CD8-positive, alpha-beta T cell (primary cell): ENCODE measurements at regions of chr19 and their contacts with region 1.

Region 1: GRCh38 chr19:30669329-30670010 is 297.3 kb downstream of the ZNF536 start:
- DNase-seq: peak in 8 of 9 experiments; percentile 11 to 59 (median 41)
- ATAC-seq: no peak
- H3K4me3 ChIP-seq: no peak overlapping the region
- H3K4me3 Mint-ChIP-seq: no peak overlapping the region
- H3K27ac ChIP-seq: no peak overlapping the region
- H3K27ac Mint-ChIP-seq: no peak overlapping the region
- H3K4me1 ChIP-seq: no peaks in the 10 kb centered on the region
- H3K4me1 Mint-ChIP-seq: no peaks in the 10 kb centered on the region
- H3K27me3 ChIP-seq: peaks cover 0 to 6% of the 10 kb centered on the region in 2 experiments
- H3K27me3 Mint-ChIP-seq: peaks cover 36% of the 10 kb centered on the region
- CTCF ChIP-seq: peak; percentile 66

Region 2: DNA sequence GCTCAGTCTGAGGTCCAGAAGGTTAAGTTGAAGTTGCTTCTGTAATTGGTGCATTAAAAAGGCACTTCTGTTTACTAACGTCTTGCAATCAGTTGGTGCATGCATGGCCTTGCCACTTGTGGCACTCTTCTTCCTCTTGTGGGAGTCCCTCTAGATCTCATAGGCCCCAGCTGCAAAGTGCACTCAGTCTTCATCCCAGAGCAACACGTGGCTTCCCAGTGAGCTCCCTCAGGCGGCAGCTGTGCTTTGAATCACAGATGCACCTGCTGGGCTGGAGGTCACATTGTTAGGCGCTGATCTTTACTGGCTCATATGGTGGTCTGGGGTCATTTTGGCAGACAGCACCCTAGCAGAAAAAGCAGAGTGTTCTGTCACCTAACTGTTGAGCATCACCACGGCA is 81.6 kb before region 1 on chr19:
- CTCF ChIA-PET with region 1: no interaction called
- POLR2A ChIA-PET with region 1: no interaction called
- intact Hi-C with region 1: no loop called
- DNase-seq: no peak
- ATAC-seq: no peak
- H3K4me3 ChIP-seq: no peak overlapping the region
- H3K4me3 Mint-ChIP-seq: no peak overlapping the region
- H3K27ac ChIP-seq: no peak overlapping the region
- H3K27ac Mint-ChIP-seq: no peak overlapping the region
- H3K4me1 ChIP-seq: no peaks in the 10 kb centered on the region
- H3K4me1 Mint-ChIP-seq: no peaks in the 10 kb centered on the region
- H3K27me3 ChIP-seq: no peaks in the 10 kb centered on the region
- H3K27me3 Mint-ChIP-seq: no peaks in the 10 kb centered on the region
- CTCF ChIP-seq: no peak

Region 3: DNA sequence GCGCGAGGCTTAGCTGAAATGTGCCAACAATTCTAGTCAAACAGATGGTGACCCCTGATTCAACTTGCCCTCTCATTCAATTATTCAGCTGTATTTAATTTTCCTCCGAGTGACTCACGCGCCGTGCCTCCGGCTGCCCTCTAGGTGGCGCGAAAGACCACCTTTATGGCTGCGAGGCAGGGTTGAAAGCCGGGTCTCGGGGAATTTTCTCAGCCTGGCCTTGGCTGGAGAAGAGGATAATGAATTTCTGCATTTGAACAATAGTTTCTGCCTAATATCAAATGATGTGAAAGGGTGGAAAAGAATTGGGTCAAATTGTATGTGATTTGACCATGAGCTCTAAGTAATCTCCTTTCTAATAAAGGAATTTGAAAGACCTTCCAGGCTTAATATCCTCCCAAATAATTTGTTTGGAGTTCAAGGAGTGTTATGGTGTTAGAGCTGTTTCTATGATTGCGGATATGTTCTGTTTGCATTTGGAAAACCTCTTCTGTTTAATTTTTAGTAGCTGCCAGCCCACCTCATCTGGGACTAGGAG is 13.6 kb after region 1 on chr19:
- CTCF ChIA-PET with region 1: interaction called, 20 read pairs
- POLR2A ChIA-PET with region 1: no interaction called
- intact Hi-C with region 1: no loop called
- DNase-seq: peak in 8 of 9 experiments; percentile 27 to 61 (median 44)
- ATAC-seq: no peak
- H3K4me3 ChIP-seq: no peak overlapping the region
- H3K4me3 Mint-ChIP-seq: no peak overlapping the region
- H3K27ac ChIP-seq: no peak overlapping the region
- H3K27ac Mint-ChIP-seq: no peak overlapping the region
- H3K4me1 ChIP-seq: no peaks in the 10 kb centered on the region
- H3K4me1 Mint-ChIP-seq: no peaks in the 10 kb centered on the region
- H3K27me3 ChIP-seq: no peaks in the 10 kb centered on the region
- H3K27me3 Mint-ChIP-seq: peaks cover 35% of the 10 kb centered on the region
- CTCF ChIP-seq: peak; percentile 68